Posterior vena cava (tissue), 2 donors: ENCODE measurements at regions of chr9 and their contacts with region 1.

Region 1: DNA sequence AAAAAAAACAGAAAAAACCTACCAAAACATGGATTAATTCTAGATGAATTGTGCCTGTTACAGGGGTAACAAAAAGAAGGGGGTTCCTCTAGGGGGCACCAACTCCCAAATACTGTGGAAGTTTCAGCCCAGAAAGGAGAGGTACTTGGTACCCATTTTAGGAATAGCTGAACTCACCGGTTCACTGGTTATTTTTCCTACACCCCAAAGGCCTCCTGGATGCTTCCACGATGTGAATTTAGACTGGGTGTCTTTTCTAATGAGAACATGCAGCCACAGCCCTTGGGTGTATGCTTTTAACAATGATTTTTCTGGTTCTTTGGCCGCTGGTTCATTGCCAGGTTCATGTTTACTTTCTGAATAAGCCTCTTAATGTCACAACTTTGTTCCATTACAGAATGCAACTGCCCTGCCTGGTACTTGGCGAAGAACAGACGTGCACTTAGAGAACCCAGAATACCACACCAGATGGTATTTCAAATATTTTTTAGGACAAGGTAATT is 46.7 kb downstream of the GARNL3 start:
- DNase-seq: no peak

Region 2: GRCh38 chr9:127263664-127264063 is 47.6 kb before region 1 on chr9:
- intact Hi-C with region 1: loop called in 1 of 2 experiments (anchors 10 kb)
- DNase-seq: no peak

Region 3: GRCh38 chr9:127277099-127277498 is 34.2 kb before region 1 on chr9:
- intact Hi-C with region 1: loop called in 1 of 2 experiments (anchors 1 kb)
- DNase-seq: no peak